ENCODE measurements at regions of chr2 and their contacts with region 1.

Region 1: GRCh38 chr2:222707689-222708525 is 36.4 kb downstream of the MOGAT1 start:
- DNase-seq: peak; percentile 88
- ATAC-seq: peak; percentile 90
- H3K4me3 Mint-ChIP-seq: no peak overlapping the region
- H3K27ac Mint-ChIP-seq: no peak overlapping the region
- H3K4me1 Mint-ChIP-seq: peaks cover 12% of the 10 kb centered on the region
- H3K27me3 Mint-ChIP-seq: peaks cover 18% of the 10 kb centered on the region

Region 2: GRCh38 chr2:221145396-221145795 is 1562.5 kb before region 1 on chr2:
- CTCF ChIA-PET with region 1: no interaction called
- POLR2A ChIA-PET with region 1: no interaction called
- intact Hi-C with region 1: no loop called
- DNase-seq: no peak
- ATAC-seq: no peak
- H3K4me3 Mint-ChIP-seq: no peak overlapping the region
- H3K27ac Mint-ChIP-seq: no peak overlapping the region
- H3K4me1 Mint-ChIP-seq: no peaks in the 10 kb centered on the region
- H3K27me3 Mint-ChIP-seq: no peaks in the 10 kb centered on the region

Region 3: DNA sequence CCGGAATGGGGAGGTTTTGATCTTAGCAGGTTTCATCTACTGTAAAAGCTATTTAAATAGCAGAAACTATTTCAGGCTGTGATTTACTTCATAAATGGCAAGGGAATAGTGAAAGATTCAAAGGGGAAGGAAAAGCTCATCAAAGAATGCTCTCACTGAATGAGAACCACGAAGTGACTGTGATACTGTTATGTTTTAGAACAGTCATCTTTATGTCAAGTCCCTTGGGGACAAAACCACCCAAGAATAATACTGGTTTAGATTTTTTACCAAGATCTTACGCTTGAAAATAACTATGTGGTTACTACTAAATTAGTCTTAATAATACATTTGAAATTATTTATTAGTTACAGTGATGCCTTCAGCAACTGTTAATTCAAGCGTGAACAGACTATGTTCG is 80.1 kb before region 1 on chr2:
- CTCF ChIA-PET with region 1: no interaction called
- POLR2A ChIA-PET with region 1: no interaction called
- intact Hi-C with region 1: no loop called
- DNase-seq: no peak
- ATAC-seq: no peak
- H3K4me3 Mint-ChIP-seq: no peak overlapping the region
- H3K27ac Mint-ChIP-seq: no peak overlapping the region
- H3K4me1 Mint-ChIP-seq: no peaks in the 10 kb centered on the region
- H3K27me3 Mint-ChIP-seq: no peaks in the 10 kb centered on the region

Region 4: GRCh38 chr2:222690564-222691200 is 17.2 kb before region 1 on chr2:
- CTCF ChIA-PET with region 1: interaction called, 19 read pairs
- POLR2A ChIA-PET with region 1: no interaction called
- intact Hi-C with region 1: no loop called
- DNase-seq: peak; percentile 88
- ATAC-seq: peak; percentile 96
- H3K4me3 Mint-ChIP-seq: no peak overlapping the region
- H3K27ac Mint-ChIP-seq: no peak overlapping the region
- H3K4me1 Mint-ChIP-seq: peaks cover 8% of the 10 kb centered on the region
- H3K27me3 Mint-ChIP-seq: no peaks in the 10 kb centered on the region

Region 5: DNA sequence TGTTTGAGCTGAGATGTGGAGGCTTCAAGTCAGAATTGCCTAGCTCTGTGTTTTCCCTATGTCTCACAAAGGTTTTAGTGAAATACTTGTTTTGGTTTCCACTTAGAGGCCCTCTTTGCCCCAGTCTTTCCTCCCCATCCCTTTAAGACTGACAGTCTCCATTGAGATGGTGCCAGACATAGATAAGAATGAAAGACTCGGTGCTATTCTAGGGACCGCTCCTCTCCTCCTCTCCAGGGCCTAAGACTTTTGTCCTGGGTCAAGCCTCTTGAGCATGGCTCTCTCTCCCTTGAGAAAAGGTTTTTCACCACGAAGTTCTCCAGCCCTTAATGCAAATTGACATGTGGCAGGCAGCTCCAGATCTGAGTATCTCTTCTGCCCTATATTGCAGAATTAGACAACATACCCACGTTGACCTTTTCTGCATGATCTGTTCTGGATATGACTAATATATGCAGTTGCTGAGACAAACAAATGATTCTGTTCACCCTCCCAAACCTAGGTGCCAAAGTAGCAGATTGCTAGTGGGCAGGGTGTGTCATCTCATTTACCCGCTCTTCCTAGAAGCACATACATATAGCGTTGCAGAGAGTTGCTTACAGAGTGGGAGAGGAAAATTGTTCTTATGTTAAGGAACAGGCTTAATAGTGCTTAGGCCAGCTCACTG is 105.4 kb after region 1 on chr2:
- CTCF ChIA-PET with region 1: interaction called, 3 read pairs
- POLR2A ChIA-PET with region 1: no interaction called
- intact Hi-C with region 1: loop called in 1 of 2 experiments (anchors 2 kb)
- DNase-seq: peak; percentile 63
- ATAC-seq: peak; percentile 91
- H3K4me3 Mint-ChIP-seq: no peak overlapping the region
- H3K27ac Mint-ChIP-seq: peak overlapping the region; percentile 90
- H3K4me1 Mint-ChIP-seq: peaks cover 27% of the 10 kb centered on the region
- H3K27me3 Mint-ChIP-seq: no peaks in the 10 kb centered on the region

Region 6: GRCh38 chr2:222903234-222904220 is 195.6 kb after region 1 on chr2:
- CTCF ChIA-PET with region 1: interaction called, 27 read pairs
- POLR2A ChIA-PET with region 1: no interaction called
- intact Hi-C with region 1: loop called (anchors 1 kb)
- DNase-seq: peak; percentile 40
- ATAC-seq: peak; percentile 66
- H3K4me3 Mint-ChIP-seq: no peak overlapping the region
- H3K27ac Mint-ChIP-seq: no peak overlapping the region
- H3K4me1 Mint-ChIP-seq: peaks cover 22% of the 10 kb centered on the region
- H3K27me3 Mint-ChIP-seq: no peaks in the 10 kb centered on the region

Region 7: GRCh38 chr2:223853425-223853837 is 1145.5 kb after region 1 on chr2:
- CTCF ChIA-PET with region 1: no interaction called
- POLR2A ChIA-PET with region 1: interaction called, 10 read pairs
- intact Hi-C with region 1: no loop called
- DNase-seq: no peak
- ATAC-seq: peak; percentile 35
- H3K4me3 Mint-ChIP-seq: no peak overlapping the region
- H3K27ac Mint-ChIP-seq: no peak overlapping the region
- H3K4me1 Mint-ChIP-seq: peaks cover 7% of the 10 kb centered on the region
- H3K27me3 Mint-ChIP-seq: no peaks in the 10 kb centered on the region

Measured in activated CD4-positive, alpha-beta T cell treated with anti-CD3 and anti-CD28 coated beads for 36 hours (primary cell).